Mammary epithelial cell (primary cell): ENCODE measurements at regions of chr1 and their contacts with region 1.

Region 1: DNA sequence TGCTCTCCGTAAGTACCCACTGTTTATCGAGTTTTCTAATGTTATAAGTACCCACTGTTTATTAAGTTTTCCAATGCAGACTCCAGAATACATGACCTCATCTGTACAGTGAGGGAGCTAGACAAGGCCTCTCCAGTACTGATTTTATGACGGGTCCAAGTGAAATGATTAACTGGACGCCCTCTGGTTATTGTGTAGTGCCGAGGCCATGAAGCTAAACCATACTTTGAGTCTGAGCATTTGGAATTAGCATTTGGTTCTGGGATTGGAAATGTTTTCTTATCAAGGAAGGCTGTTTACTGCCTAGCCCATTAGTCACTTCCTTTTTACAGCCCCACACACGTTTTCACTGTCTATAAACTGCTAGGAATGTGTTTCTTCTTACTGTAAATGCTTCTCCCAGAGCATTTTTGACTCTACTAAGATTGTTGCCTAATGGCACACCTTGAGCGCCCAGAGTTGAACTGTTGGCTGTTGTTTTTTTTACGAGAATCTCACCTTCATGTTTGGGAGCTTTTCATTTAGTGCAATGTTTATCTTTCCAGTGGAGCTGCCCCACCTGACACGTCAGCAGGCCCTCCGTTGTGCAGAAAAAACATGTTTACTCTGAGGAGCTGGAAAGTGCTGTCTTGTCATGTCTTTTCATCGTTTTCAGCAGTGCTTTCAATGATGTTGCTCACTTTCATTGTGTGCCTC is 26.9 kb downstream of the SPATA46 start:
- DNase-seq: peak; percentile 77
- H3K4me3 ChIP-seq: no peak overlapping the region
- H3K27ac ChIP-seq: peak overlapping the region; percentile 33
- H3K4me1 ChIP-seq: peaks cover 22% of the 10 kb centered on the region
- H3K27me3 ChIP-seq: no peaks in the 10 kb centered on the region
- CTCF ChIP-seq: no peak

Region 2: GRCh38 chr1:162040681-162041080 is 309.1 kb before region 1 on chr1:
- CTCF ChIA-PET with region 1: no interaction called
- dilution Hi-C with region 1: no loop called
- in situ Hi-C with region 1: no loop called
- intact Hi-C with region 1: no loop called
- DNase-seq: peak; percentile 43
- H3K4me3 ChIP-seq: no peak overlapping the region
- H3K27ac ChIP-seq: no peak overlapping the region
- H3K4me1 ChIP-seq: peaks cover 7% of the 10 kb centered on the region
- H3K27me3 ChIP-seq: no peaks in the 10 kb centered on the region
- CTCF ChIP-seq: peak; percentile 56 to 61

Region 3: DNA sequence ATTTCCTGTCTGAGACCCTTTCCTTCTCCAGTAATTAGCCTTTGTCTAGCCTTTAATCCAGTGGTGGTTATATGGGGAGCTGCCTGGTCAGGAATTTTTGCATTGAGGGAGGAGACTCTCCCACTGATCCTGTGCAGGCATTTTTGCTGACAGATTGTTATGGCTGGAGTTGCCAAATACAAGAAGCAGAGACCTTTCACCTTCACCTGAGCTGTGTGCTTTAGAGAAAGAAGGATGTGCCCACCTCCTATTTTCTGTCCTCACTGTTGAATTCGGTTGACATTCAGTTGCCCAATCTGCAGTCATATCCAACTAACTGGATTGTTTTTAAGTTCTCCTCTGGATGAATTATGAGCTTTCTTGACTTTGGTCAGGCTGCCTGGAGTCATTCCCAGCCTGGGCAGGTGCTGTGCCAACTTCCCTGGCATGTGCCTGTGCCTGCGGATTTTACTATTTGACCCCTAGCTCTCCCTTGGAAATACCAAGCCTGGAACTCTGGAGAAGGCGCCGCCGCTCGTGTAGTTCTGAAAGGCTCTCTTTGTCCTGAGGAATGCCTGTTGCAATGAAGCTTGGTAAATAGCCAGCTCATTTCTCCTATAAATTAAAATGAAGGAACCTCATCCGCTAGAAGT is 136.4 kb before region 1 on chr1:
- CTCF ChIA-PET with region 1: no interaction called
- dilution Hi-C with region 1: no loop called
- in situ Hi-C with region 1: no loop called
- intact Hi-C with region 1: no loop called
- DNase-seq: peak; percentile 84
- H3K4me3 ChIP-seq: no peak overlapping the region
- H3K27ac ChIP-seq: no peak overlapping the region
- H3K4me1 ChIP-seq: peaks cover 21% of the 10 kb centered on the region
- H3K27me3 ChIP-seq: no peaks in the 10 kb centered on the region
- CTCF ChIP-seq: no peak

Region 4: DNA sequence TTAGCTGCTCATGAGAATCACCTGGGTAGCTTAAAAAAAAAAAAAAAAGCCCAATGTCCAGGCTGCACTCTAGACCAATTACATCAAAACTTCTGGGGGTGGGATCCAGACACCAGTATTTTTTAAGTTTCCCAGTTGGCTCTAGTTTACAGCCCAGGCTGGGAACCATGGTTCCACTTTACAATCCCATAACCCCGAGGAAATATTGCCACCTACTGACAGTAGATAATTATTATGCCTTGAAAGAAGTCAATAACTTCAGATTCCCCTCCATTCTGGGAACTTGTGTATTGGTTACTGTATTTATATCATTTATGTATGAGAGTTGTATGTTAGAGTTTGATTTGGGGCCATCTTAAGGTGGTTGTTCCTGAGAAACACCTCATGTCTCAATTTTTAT is 73.3 kb before region 1 on chr1:
- CTCF ChIA-PET with region 1: no interaction called
- dilution Hi-C with region 1: no loop called
- in situ Hi-C with region 1: no loop called
- intact Hi-C with region 1: loop called (anchors 5 kb)
- DNase-seq: peak; percentile 16
- H3K4me3 ChIP-seq: no peak overlapping the region
- H3K27ac ChIP-seq: no peak overlapping the region
- H3K4me1 ChIP-seq: no peaks in the 10 kb centered on the region
- H3K27me3 ChIP-seq: no peaks in the 10 kb centered on the region
- CTCF ChIP-seq: peak in 1 of 2 donors; percentile 57

Region 5: DNA sequence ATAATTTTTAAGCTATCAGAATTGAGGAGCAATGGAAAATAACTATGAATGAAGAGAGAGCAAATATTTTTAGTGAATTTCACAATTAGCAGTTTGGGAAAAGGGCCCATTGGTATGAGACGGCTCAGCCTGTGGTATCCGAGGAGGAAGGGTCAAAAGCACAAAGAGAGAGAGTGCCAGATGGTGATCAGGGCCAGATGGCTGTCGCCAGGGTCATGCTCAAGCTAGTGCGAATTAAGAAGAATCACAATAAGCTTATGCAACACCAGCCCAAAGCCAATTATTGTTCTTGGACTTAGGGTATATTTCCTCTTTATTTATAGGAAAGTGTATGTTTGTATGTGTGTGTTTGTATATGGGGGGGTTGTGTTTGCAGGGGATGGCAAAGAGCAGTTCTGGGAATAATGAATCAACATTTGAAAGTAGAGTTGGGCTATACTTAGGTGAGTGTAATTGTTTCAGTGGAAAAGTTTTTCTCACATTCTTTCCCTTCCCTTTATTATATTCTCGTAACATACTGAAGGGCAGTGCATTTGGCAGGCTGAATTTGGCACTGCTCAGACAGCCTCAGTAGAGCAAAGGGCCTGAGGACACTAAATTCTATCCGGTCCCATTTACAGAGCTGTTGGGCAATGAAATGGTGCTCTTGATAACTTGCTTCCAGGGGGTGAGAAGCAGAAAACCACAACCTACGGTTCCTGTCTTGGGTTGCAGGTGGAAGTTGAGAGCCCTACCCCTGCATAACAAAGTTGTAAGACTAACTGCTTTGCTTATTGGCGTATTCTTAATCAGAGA is 263.0 kb after region 1 on chr1:
- CTCF ChIA-PET with region 1: no interaction called
- dilution Hi-C with region 1: no loop called
- in situ Hi-C with region 1: no loop called
- intact Hi-C with region 1: no loop called
- DNase-seq: no peak
- H3K4me3 ChIP-seq: no peak overlapping the region
- H3K27ac ChIP-seq: no peak overlapping the region
- H3K4me1 ChIP-seq: no peaks in the 10 kb centered on the region
- H3K27me3 ChIP-seq: no peaks in the 10 kb centered on the region
- CTCF ChIP-seq: no peak